Activated naive CD4-positive, alpha-beta T cell treated with anti-CD3 and anti-CD28 coated beads for 36 hours (primary cell): ENCODE measurements at regions of chr2 and their contacts with region 1.

Region 1: GRCh38 chr2:28392297-28393113 is at the start of gene FOSL2:
- DNase-seq: peak; percentile 97
- H3K4me3 Mint-ChIP-seq: peak within 1 kb of the TSS; percentile 94
- H3K27ac Mint-ChIP-seq: peak within 1 kb of the TSS; percentile 99
- H3K4me1 Mint-ChIP-seq: peaks cover 30% of the 10 kb centered on the region
- H3K27me3 Mint-ChIP-seq: no peaks in the 10 kb centered on the region
- total RNA-seq, gene FOSL2: 102 to 110 TPM

Region 2: GRCh38 chr2:27715318-27716210 is 676.9 kb before region 1 on chr2:
- CTCF ChIA-PET with region 1: no interaction called
- intact Hi-C with region 1: loop called (anchors 5 kb)
- DNase-seq: peak; percentile 67
- H3K4me3 Mint-ChIP-seq: peak overlapping the region; percentile 32
- H3K27ac Mint-ChIP-seq: no peak overlapping the region
- H3K4me1 Mint-ChIP-seq: peaks cover 43% of the 10 kb centered on the region
- H3K27me3 Mint-ChIP-seq: peaks cover 11% of the 10 kb centered on the region

Region 3: DNA sequence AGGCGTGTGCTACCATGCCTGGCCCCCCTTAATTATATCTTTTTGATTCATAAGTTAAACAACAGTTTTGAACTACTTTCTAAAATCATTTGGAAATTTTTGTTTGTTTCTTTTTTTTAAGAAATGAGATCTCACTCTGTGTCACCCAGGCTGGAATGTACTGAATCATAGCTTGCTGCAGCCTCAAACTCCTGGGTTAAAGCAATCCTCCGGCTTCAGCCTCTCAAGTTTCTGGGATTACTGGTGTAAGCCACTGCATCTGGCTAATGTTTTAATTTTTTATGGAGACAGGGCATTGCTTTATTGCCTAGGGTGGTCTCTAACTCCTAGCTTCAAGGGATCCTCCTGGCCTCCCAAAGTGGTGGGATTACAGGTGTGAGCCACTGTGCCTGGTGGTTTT is 430.5 kb before region 1 on chr2:
- CTCF ChIA-PET with region 1: no interaction called
- intact Hi-C with region 1: no loop called
- DNase-seq: no peak
- H3K4me3 Mint-ChIP-seq: no peak overlapping the region
- H3K27ac Mint-ChIP-seq: no peak overlapping the region
- H3K4me1 Mint-ChIP-seq: peaks cover 59% of the 10 kb centered on the region
- H3K27me3 Mint-ChIP-seq: no peaks in the 10 kb centered on the region

Region 4: DNA sequence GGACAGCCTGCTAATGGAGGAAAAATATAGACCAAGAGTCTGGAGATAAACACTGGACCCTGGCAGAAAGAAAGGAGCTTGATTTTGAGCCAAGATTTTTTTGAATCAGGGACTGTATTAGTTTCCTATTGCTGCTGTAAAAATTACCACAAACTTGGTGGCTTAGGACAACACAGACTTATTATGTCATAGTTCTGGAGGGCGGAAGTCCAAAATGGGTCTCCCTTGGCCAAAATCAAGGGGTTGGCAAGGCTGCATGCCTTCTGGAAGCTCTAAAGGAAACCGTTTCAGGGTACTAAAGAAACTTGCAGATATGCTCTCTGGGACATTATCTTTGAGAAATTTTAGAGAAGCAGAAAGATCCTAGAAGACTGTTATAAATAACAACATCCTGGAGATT is 361.9 kb before region 1 on chr2:
- CTCF ChIA-PET with region 1: no interaction called
- intact Hi-C with region 1: loop called (anchors 10 kb)
- DNase-seq: no peak
- H3K4me3 Mint-ChIP-seq: no peak overlapping the region
- H3K27ac Mint-ChIP-seq: no peak overlapping the region
- H3K4me1 Mint-ChIP-seq: peaks cover 17% of the 10 kb centered on the region
- H3K27me3 Mint-ChIP-seq: no peaks in the 10 kb centered on the region

Region 5: GRCh38 chr2:28045676-28046351 is 346.7 kb before region 1 on chr2:
- CTCF ChIA-PET with region 1: no interaction called
- intact Hi-C with region 1: no loop called
- DNase-seq: no peak
- H3K4me3 Mint-ChIP-seq: no peak overlapping the region
- H3K27ac Mint-ChIP-seq: no peak overlapping the region
- H3K4me1 Mint-ChIP-seq: no peaks in the 10 kb centered on the region
- H3K27me3 Mint-ChIP-seq: no peaks in the 10 kb centered on the region

Region 6: GRCh38 chr2:28349546-28350165 is 42.8 kb before region 1 on chr2:
- CTCF ChIA-PET with region 1: no interaction called
- intact Hi-C with region 1: loop called (anchors 2 kb)
- DNase-seq: no peak
- H3K4me3 Mint-ChIP-seq: no peak overlapping the region
- H3K27ac Mint-ChIP-seq: no peak overlapping the region
- H3K4me1 Mint-ChIP-seq: peaks cover 31% of the 10 kb centered on the region
- H3K27me3 Mint-ChIP-seq: no peaks in the 10 kb centered on the region

Region 7: DNA sequence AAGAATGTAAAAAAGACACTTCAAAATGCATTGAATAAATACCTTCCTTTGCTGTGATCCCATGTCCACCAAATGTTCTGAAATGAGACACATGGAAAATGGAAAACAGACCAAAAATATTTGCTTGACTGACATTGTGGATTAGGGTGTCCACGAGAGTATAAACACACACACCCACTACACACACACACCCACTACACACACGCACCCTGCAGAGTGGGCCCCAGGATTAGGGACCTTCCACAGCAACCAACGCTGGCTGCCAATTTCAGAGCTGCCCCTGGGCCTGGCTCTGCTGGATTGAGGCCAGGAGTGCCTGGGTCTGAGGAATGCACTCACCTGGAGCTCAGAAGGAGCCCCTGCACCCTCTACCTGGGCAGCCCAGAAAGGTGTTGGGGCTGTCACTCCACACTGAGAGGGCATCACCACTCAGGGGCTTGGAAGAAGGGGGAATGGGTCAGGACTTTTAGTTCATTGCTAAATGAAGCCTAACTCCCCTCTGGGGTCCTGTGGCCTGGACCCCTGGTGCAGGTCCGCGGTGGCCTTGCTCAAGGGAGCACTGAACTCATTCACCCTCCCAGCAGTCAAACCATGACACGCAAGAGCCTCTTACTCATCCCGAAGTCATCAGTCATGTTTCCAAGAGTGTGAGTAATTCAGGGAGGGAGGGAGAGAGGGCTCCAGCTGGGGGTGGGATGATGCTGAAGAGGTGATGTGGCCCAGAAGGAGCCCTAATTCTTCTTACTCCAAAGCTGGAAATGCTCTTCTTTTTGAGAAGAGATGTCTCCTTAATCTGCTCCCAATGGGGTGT is 53.1 kb after region 1 on chr2:
- CTCF ChIA-PET with region 1: no interaction called
- intact Hi-C with region 1: loop called (anchors 1 kb)
- DNase-seq: peak; percentile 87
- H3K4me3 Mint-ChIP-seq: peak overlapping the region; percentile 37
- H3K27ac Mint-ChIP-seq: peak overlapping the region; percentile 80
- H3K4me1 Mint-ChIP-seq: peaks cover 68% of the 10 kb centered on the region
- H3K27me3 Mint-ChIP-seq: no peaks in the 10 kb centered on the region

Region 8: DNA sequence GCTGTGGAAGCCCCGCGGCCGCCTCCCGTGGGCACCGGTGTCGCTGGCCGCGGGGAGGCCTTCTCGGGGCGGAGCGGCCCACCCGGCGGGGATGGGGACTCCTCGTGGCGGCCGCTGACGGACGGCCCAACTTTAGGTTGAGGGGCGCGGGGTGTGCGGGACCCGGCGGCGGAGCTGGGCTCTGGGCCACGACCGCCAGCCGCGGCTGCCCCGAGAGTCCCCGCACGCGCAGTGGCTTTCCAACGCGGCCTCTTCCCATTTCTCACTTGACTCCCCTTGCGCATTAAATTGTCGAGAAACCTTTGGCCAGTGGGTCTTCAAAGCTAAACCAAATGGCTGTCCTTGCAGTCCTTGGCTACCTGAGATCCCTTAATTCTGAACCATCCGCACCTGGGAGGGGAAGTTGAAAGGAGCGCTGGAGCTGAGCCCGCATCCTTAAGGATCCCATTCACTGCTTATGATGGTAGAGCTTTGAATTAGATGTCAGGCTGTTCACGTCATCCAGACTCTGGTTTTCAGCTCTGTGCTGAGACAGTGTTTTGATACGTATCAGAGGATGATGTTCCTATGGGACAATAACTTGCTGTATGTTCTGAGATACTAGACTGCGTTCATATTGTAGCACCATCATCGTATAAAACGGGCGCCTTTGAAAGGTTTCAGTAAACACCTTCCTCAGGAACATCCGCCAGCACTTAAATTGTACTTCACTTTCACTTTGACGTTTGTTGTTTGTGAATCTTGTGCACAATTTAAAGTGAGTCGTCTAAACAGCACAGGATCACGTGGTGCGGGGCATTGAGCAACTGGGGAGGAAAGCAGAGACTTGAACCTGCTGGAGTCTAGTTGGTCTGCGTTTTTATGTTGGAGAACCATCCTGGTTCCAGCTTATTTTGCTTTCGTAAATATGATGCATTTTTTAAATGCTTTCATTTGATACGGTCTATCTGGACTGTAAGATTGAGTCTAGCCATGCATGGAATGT is 723.6 kb after region 1 on chr2:
- CTCF ChIA-PET with region 1: no interaction called
- intact Hi-C with region 1: loop called (anchors 10 kb)
- DNase-seq: peak; percentile 90
- H3K4me3 Mint-ChIP-seq: peak overlapping the region; percentile 90
- H3K27ac Mint-ChIP-seq: peak overlapping the region; percentile 87
- H3K4me1 Mint-ChIP-seq: peaks cover 52% of the 10 kb centered on the region
- H3K27me3 Mint-ChIP-seq: peaks cover 3% of the 10 kb centered on the region